PC-9 (cell line): ENCODE measurements at regions of chr7 and their contacts with region 1.

Region 1: GRCh38 chr7:98400542-98401340 is at the start of gene BAIAP2L1:
- DNase-seq: peak; percentile 76 to 100
- H3K4me3 ChIP-seq: peak within 1 kb of the TSS; percentile 87
- H3K27ac ChIP-seq: peak within 1 kb of the TSS; percentile 85
- H3K4me1 ChIP-seq: peaks cover 29% of the 10 kb centered on the region
- H3K27me3 ChIP-seq: no peaks in the 10 kb centered on the region
- CTCF ChIP-seq: no peak
- total RNA-seq, gene BAIAP2L1: 89.4 and 102 TPM in 2 replicates

Region 2: DNA sequence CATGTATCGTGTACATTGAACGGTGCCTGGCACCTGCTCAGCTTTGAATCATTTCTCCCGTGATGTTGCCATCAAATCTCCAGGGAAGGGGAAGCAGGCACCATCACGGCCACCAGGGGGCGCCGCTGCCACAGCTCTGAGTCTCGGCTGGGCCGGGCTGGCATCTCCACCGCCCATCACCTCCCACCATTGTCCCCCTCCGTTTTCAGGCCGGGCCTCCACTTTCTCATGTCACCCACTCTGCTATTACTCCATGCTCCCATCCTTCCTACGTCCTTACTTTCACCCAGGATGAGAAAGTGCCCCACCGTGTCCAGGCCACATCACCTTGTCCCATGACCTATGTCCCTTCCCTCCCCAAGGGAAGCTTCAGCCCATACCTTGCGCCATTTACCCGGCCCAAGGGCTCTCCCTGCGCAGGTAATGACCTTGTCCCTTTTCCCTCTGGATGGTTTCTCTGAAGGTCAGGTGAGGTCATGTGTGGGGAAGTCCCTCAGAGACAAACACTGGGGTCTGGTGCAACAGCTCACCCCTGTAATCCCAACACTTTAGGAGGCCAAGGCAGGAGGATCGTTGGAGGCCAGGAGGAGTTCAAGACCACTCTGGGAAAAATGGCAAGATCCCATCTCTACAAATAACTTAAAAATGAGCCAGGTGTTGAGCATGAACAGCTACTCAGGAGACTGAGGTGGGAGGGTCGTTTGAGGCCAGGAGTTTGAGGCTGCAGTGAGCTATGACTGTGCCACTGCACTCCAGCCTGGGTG is 379.0 kb before region 1 on chr7:
- CTCF ChIA-PET with region 1: no interaction called
- POLR2A ChIA-PET with region 1: interaction called, 6 read pairs
- intact Hi-C with region 1: loop called (anchors 5 kb)
- DNase-seq: peak; percentile 55 to 85
- H3K4me3 ChIP-seq: no peak overlapping the region
- H3K27ac ChIP-seq: no peak overlapping the region
- H3K4me1 ChIP-seq: no peaks in the 10 kb centered on the region
- H3K27me3 ChIP-seq: no peaks in the 10 kb centered on the region
- CTCF ChIP-seq: peak; percentile 94

Region 3: DNA sequence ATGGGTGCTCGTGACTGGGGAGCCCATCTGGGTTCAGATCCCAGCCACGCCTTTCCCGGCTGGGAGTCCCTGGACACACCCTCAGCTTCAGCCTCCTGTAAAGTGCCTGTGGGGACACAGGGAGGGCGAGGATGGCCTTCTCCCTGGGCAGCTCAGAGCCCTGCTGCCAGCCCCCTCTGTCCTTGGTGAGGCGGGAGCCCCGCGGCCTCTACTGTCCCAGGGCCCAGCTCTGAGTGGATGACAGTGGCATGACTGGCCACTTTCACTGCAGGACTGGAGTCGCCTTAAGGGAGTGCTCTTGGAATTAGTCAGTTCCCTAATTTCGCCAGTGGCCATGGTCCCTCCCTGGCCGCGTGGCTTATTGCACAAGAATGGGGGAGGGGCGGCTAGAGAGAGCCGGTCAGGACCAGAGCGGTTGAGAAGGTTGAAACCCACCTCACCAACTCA is 114.6 kb before region 1 on chr7:
- CTCF ChIA-PET with region 1: no interaction called
- POLR2A ChIA-PET with region 1: interaction called, 5 read pairs
- intact Hi-C with region 1: loop called (anchors 2 kb)
- DNase-seq: peak; percentile 76 to 92
- H3K4me3 ChIP-seq: peak overlapping the region; percentile 87
- H3K27ac ChIP-seq: peak overlapping the region; percentile 97
- H3K4me1 ChIP-seq: peaks cover 55% of the 10 kb centered on the region
- H3K27me3 ChIP-seq: no peaks in the 10 kb centered on the region
- CTCF ChIP-seq: no peak; the same call in 1 of the 2 replicates

Region 4: DNA sequence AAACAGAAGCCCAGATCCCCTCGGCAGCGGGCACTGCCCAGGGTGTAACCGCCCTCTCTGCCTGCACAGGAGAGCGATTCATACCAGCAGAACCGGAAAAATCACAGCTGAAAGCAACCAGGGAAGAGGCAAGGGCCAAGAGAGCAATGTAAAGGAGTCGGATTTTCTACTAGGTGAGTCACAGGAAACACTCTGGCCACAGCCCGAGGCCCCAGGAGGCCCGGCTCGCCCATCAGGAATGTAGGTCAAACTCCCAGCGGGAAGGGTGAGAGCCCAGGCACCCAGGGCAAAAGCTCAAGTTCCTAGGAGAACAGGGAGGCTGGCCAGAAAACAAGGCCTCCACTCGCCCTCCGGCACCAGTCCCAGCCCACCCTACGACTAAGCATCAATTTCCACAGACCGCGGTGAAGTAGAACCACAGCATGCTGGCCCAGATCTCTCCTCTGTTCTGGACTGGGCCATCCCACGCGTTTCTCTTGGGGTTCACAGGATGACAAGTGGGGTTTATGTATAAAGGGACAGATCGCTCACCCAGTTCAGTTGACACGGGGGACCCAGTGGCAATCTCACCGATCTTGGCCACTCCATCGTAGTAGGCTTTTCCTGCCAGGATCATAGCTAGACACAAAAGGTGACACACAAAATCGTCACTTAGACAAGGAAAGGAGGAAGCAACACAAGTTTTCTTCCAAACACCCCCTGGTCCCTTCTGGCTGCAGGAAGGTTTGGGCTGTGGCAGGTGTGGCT is 46.1 kb before region 1 on chr7:
- CTCF ChIA-PET with region 1: interaction called, 3 read pairs
- POLR2A ChIA-PET with region 1: no interaction called
- intact Hi-C with region 1: loop called (anchors 2 kb)
- DNase-seq: peak; percentile 96 to 97
- H3K4me3 ChIP-seq: peak overlapping the region; percentile 52
- H3K27ac ChIP-seq: peak overlapping the region; percentile 94
- H3K4me1 ChIP-seq: peaks cover 93% of the 10 kb centered on the region
- H3K27me3 ChIP-seq: no peaks in the 10 kb centered on the region
- CTCF ChIP-seq: no peak

Region 5: GRCh38 chr7:98459529-98459928 is 58.8 kb after region 1 on chr7:
- CTCF ChIA-PET with region 1: no interaction called
- POLR2A ChIA-PET with region 1: no interaction called
- intact Hi-C with region 1: no loop called
- DNase-seq: no peak
- H3K4me3 ChIP-seq: no peak overlapping the region
- H3K27ac ChIP-seq: no peak overlapping the region
- H3K4me1 ChIP-seq: no peaks in the 10 kb centered on the region
- H3K27me3 ChIP-seq: peaks cover 43% of the 10 kb centered on the region
- CTCF ChIP-seq: no peak

Region 6: DNA sequence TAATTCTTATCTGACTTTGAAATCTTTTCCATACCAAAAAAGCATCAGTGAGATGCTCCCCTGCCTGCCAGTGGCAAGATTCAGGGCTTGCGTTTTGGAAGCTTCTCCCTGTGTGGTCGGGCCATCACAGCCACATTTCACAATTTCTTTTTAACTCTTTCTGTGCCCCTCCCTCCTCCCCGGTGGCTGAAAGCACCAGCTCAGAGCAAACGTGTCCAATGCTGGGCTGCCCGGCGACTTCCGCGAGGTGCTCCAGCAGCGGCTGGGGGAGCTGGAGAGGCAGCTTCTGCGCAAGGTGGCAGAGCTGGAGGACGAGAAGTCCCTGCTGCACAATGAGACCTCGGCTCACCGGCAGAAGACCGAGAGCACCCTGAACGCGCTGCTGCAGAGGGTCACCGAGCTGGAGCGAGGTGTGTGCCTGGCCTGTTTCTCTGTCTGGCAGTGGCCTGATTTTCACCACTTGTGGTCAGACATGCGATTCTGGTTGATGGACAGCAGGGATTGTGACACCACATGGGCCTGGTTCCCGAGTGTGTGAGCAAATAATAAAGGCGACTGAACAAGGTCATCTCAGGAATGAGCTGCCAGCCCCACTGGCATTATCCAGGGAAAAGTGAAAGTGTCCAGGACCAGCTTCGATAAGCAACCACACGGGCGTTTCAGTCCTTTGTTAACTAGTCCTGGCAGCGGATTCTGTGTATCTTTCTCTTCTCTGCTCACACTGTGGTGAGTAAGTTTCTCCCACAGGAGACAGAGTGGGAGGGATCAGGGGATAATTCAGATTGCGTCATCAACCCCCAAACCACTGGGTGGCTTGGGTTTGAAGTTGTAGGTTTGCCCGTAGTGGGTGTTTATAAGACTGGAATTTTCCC is 218.9 kb after region 1 on chr7:
- CTCF ChIA-PET with region 1: interaction called, 14 read pairs
- POLR2A ChIA-PET with region 1: no interaction called
- intact Hi-C with region 1: no loop called
- DNase-seq: no peak
- H3K4me3 ChIP-seq: no peak overlapping the region
- H3K27ac ChIP-seq: no peak overlapping the region
- H3K4me1 ChIP-seq: no peaks in the 10 kb centered on the region
- H3K27me3 ChIP-seq: peaks cover 62% of the 10 kb centered on the region
- CTCF ChIP-seq: no peak